Heart left ventricle (tissue), 16 donors: ENCODE measurements at regions of chr19 and their contacts with region 1.

Region 1: GRCh38 chr19:10946964-10947657 is 13.7 kb upstream of the SMARCA4 start:
- DNase-seq: no peak
- ATAC-seq: no peak
- H3K4me3 ChIP-seq: no peak overlapping the region
- H3K27ac ChIP-seq: no peak overlapping the region
- H3K4me1 ChIP-seq: peaks cover 0 to 5% (median 0%) of the 10 kb centered on the region in 12 donors
- H3K27me3 ChIP-seq: no peaks in the 10 kb centered on the region
- CTCF ChIP-seq: no peak
- POLR2A ChIP-seq: no peak

Region 2: GRCh38 chr19:10911579-10912363 is 35.3 kb before region 1 on chr19:
- intact Hi-C with region 1: no loop called
- DNase-seq: no peak
- ATAC-seq: no peak
- H3K4me3 ChIP-seq: no peak overlapping the region
- H3K27ac ChIP-seq: no peak overlapping the region
- H3K4me1 ChIP-seq: no peaks in the 10 kb centered on the region
- H3K27me3 ChIP-seq: no peaks in the 10 kb centered on the region
- CTCF ChIP-seq: no peak
- POLR2A ChIP-seq: no peak

Region 3: DNA sequence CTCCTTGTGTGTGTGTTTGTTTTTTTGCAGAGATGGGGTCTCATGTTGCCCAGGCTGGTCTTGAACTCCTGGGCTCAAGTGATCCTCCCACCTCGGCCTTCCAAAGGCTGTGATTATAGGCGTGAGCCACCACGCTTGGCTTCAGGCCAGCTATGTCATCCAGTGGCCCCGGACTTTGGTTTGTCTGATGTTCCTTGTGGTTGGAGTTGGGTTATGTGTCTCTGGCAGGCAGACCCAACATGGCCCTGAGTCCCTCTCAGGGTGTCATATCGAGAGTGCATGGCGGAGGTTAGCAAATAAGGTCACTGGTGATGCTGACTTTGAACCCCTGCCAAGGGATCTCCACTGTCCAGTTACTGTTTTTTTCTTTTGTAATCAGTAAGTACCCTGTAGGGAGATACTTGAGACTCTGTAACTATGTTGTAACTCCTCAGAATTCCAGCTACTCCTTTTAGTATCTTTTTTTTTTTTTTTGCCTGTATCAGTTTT is 51.0 kb after region 1 on chr19:
- intact Hi-C with region 1: loop called in 1 of 10 experiments (anchors 10 kb)
- DNase-seq: no peak
- ATAC-seq: no peak
- H3K4me3 ChIP-seq: no peak overlapping the region
- H3K27ac ChIP-seq: no peak overlapping the region
- H3K4me1 ChIP-seq: peaks cover 0 to 10% (median 0%) of the 10 kb centered on the region in 12 donors
- H3K27me3 ChIP-seq: no peaks in the 10 kb centered on the region
- CTCF ChIP-seq: no peak
- POLR2A ChIP-seq: no peak

Region 4: GRCh38 chr19:11018179-11018578 is 71.1 kb after region 1 on chr19:
- intact Hi-C with region 1: loop called in 2 of 10 experiments (anchors 5 to 10 kb)
- DNase-seq: no peak
- ATAC-seq: no peak
- H3K4me3 ChIP-seq: no peak overlapping the region
- H3K27ac ChIP-seq: no peak overlapping the region
- H3K4me1 ChIP-seq: peaks cover 0 to 18% (median 0%) of the 10 kb centered on the region in 12 donors
- H3K27me3 ChIP-seq: no peaks in the 10 kb centered on the region
- CTCF ChIP-seq: no peak
- POLR2A ChIP-seq: no peak

Region 5: DNA sequence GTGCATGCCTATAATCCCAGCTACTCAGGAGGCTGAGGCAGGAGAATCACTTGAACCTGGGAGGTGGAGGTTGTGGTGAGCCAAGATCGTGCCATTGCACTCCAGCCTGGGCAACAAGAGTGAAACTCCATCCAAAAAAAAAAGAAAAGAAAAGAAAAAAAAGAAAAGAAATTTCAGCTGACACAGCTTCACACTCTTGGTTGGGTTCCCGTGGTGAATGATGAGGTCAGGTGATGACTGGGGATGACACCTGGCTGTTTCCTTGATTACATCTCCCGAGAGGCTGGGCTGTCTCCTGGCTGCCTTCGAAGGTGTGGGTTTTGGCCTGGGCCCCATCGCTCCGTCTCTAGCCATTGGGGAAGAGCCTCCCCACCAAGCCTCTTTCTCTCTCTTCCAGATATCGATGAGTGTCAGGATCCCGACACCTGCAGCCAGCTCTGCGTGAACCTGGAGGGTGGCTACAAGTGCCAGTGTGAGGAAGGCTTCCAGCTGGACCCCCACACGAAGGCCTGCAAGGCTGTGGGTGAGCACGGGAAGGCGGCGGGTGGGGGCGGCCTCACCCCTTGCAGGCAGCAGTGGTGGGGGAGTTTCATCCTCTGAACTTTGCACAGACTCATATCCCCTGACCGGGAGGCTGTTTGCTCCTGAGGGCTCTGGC is 164.1 kb after region 1 on chr19:
- intact Hi-C with region 1: loop called in 1 of 10 experiments (anchors 10 kb)
- DNase-seq: no peak
- ATAC-seq: no peak
- H3K4me3 ChIP-seq: no peak overlapping the region
- H3K27ac ChIP-seq: no peak overlapping the region
- H3K4me1 ChIP-seq: no peaks in the 10 kb centered on the region
- H3K27me3 ChIP-seq: no peaks in the 10 kb centered on the region
- CTCF ChIP-seq: no peak
- POLR2A ChIP-seq: no peak